ENCODE measurements at regions of chr1 and their contacts with region 1.

Region 1: GRCh38 chr1:175169305-175170018 is 23.1 kb downstream of the KIAA0040 start:
- DNase-seq: peak; percentile 81
- ATAC-seq: peak; percentile 80
- H3K4me3 ChIP-seq: peak overlapping the region in 1 of 2 experiments; percentile 38; a peak in 2 of 4 replicates
- H3K27ac ChIP-seq: peak overlapping the region; percentile 89
- H3K4me1 ChIP-seq: peaks cover 44 to 61% of the 10 kb centered on the region in 2 experiments
- H3K27me3 ChIP-seq: no peaks in the 10 kb centered on the region
- CTCF ChIP-seq: no peak
- POLR2A ChIP-seq: no peak
- RAD21 ChIP-seq: peak; percentile 30

Region 2: DNA sequence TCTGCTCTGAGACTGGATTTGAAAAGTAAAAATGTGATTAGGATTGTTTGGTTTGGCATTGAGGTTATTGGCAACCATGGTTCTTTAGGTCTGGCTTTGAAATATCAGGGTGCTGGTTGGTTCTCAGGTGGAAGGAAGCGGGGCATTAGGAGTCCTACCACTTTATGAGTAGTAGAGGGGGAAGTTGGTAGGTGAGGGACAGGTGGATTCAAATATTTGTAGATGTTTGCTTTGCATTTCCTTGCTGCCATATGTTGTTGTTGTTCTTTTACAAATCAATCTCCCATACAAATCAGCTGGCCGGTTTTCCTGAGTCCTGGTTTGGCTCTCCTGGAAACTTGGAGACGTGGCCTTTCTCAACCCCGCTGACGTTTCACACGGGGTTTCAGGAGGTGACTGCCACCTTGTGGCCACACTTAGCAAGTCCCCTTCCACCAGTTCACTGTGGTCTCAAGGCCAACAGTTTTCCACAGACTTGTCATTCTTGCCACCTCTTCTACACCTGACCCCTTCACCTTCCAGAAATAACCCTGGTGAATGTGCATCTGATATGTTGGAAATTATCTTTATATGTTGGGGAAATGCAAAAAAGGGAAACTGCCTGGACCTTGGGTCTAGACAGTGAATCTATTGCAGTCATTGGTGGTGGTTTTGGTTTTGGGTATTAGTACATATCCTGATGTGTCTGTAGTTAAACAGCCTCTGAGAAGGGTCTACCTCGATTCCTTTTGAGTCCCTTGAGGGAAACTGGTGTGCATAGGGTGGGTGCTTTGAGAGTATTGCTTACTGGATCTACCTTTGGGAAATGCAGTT is 150.2 kb after region 1 on chr1:
- CTCF ChIA-PET with region 1: interaction called, 11 read pairs
- POLR2A ChIA-PET with region 1: no interaction called
- RAD21 ChIA-PET with region 1: no interaction called
- intact Hi-C with region 1: no loop called
- DNase-seq: peak; percentile 66
- ATAC-seq: peak; percentile 96
- H3K4me3 ChIP-seq: no peak overlapping the region
- H3K27ac ChIP-seq: no peak overlapping the region
- H3K4me1 ChIP-seq: peaks cover 0 to 12% of the 10 kb centered on the region in 2 experiments; a peak in 2 of 4 replicates
- H3K27me3 ChIP-seq: no peaks in the 10 kb centered on the region
- CTCF ChIP-seq: peak; percentile 86 to 90 (median 87)
- POLR2A ChIP-seq: no peak
- RAD21 ChIP-seq: peak; percentile 97